Breast epithelium (tissue), 4 donors: ENCODE measurements at regions of chr7 and their contacts with region 1.

Region 1: DNA sequence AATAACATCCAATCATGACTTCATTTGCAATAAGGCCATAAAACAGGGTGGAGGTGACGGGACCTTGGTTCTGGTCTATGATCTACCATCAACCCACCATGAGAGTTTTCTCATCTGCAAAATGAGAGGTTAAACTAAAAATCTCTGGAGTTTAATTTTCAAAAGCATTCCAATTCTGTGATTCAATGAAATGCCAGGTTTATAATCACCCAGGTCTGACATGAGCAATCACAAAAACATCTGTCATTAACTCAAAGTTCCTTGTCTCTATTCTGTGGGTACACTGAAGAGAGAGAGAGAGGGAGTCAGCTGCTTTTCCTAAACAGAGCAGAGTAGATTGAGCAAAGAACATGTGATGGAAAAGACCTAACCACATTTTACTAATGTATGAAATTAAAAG is 75.4 kb downstream of the NUDCD3 start:
- DNase-seq: no peak
- H3K4me3 ChIP-seq: no peak overlapping the region
- H3K27ac ChIP-seq: no peak overlapping the region
- H3K4me1 ChIP-seq: no peaks in the 10 kb centered on the region
- H3K27me3 ChIP-seq: no peaks in the 10 kb centered on the region
- CTCF ChIP-seq: no peak
- POLR2A ChIP-seq: no peak

Region 2: DNA sequence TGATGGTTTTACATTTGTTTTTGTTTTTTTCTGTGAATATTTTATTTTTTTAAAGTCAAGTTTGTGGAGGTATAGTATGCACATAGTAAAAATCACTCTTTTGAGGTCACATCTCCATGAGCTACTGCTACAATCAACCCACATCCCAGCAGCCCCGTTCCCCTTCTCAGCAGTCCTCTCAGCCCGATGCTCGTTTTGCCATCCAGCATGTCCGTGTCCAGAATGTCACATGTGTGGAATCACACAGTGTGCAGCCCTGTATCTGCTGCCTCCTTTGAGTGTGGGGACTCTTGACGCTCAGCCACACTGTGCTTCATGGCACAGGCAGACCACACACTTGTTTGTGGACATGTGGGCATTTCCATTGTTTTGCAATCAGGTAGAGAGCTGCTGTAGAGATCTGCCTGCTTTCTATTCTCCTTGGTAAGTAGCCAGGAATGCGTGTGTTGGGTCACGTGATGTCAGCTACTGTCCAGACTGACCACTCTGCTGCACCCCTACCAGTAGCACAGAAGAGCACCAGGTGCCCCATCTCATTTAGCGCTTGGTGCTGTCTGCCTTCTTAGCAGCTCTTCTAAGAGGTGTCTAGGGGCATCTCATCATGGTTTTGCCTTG is 18.0 kb before region 1 on chr7:
- intact Hi-C with region 1: no loop called
- DNase-seq: no peak
- H3K4me3 ChIP-seq: no peak overlapping the region
- H3K27ac ChIP-seq: no peak overlapping the region
- H3K4me1 ChIP-seq: no peaks in the 10 kb centered on the region
- H3K27me3 ChIP-seq: no peaks in the 10 kb centered on the region
- CTCF ChIP-seq: no peak
- POLR2A ChIP-seq: no peak

Region 3: GRCh38 chr7:44465490-44465889 is 50.4 kb after region 1 on chr7:
- intact Hi-C with region 1: loop called (anchors 2 kb)
- DNase-seq: no peak
- H3K4me3 ChIP-seq: no peak overlapping the region
- H3K27ac ChIP-seq: no peak overlapping the region
- H3K4me1 ChIP-seq: no peaks in the 10 kb centered on the region
- H3K27me3 ChIP-seq: no peaks in the 10 kb centered on the region
- CTCF ChIP-seq: no peak
- POLR2A ChIP-seq: no peak